Mammary epithelial cell (primary cell): ENCODE measurements at regions of chr4 and their contacts with region 1.

Region 1: DNA sequence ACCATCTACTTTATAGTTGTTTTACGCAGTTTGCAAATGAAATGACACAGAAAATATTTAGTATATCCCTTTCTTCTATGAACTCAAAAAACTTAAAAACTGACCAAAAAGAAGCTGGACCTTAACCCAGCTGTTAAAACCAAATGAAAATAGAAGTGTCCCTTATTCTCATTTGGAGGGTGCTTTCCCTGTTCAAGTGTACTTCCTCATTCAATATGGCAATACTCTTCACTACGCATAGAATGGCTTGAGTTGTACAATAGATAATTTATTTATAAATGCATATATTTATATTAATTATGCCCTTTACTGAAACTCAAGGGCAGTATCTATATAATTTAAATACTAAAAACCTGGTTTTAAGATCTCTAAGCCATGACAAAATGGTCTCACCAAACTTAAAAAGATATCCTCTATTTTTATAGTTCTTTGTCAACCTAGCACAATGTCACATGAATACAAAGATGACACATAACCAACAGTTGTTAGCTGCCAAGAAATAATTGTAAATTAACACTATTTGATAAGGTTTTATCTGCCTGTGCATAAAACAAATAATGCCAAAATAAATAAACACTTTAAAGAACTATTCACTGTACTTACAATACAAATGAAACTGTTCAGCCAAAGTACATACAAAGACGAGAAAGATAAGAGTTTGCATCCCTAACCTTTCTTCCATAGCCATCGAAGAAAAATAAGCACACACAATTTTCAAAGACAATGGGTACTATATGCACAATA is 25.2 kb downstream of the YTHDC1 start:
- DNase-seq: no peak
- H3K4me3 ChIP-seq: no peak overlapping the region
- H3K27ac ChIP-seq: no peak overlapping the region
- H3K4me1 ChIP-seq: no peaks in the 10 kb centered on the region
- H3K27me3 ChIP-seq: no peaks in the 10 kb centered on the region
- CTCF ChIP-seq: no peak

Region 2: DNA sequence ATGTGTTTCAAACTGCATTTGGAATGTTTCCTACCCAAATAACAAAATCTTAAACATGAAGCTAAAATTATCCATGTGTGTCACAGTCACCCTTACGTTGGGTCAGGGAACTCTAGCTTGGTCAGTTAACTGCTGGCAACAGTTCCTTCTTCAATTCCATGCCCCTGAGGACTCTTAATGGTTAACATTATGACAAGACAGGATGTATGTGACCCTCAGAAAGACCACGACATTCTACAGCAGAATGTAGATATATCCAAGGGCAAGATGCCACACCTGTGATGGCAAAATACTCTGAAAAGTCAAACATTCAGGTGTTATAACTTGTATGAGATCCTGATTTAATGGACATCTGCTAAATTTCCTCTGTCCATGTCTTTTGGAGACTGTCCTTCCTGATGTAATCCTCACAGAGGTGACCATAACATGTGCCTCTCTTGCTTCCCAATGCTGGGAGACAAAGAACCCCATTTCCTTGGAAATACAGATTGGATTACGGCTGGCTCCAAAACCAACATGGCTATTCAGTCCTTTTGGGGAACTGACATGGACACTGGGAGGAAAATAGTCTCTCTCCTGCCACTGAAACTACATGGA is 13.9 kb before region 1 on chr4:
- CTCF ChIA-PET with region 1: no interaction called
- dilution Hi-C with region 1: no loop called
- in situ Hi-C with region 1: no loop called
- intact Hi-C with region 1: loop called (anchors 2 kb)
- DNase-seq: no peak
- H3K4me3 ChIP-seq: no peak overlapping the region
- H3K27ac ChIP-seq: no peak overlapping the region
- H3K4me1 ChIP-seq: no peaks in the 10 kb centered on the region
- H3K27me3 ChIP-seq: no peaks in the 10 kb centered on the region
- CTCF ChIP-seq: no peak

Region 3: GRCh38 chr4:68375667-68376559 is 51.2 kb after region 1 on chr4:
- CTCF ChIA-PET with region 1: interaction called, 5 read pairs
- dilution Hi-C with region 1: no loop called
- in situ Hi-C with region 1: no loop called
- intact Hi-C with region 1: loop called (anchors 10 kb)
- DNase-seq: peak; percentile 77
- H3K4me3 ChIP-seq: peak overlapping the region; percentile 45 to 49 (median 46)
- H3K27ac ChIP-seq: no peak overlapping the region
- H3K4me1 ChIP-seq: peaks cover 19% of the 10 kb centered on the region
- H3K27me3 ChIP-seq: no peaks in the 10 kb centered on the region
- CTCF ChIP-seq: peak; percentile 95 to 99